ENCODE measurements at regions of chr9 and their contacts with region 1.

Region 1: DNA sequence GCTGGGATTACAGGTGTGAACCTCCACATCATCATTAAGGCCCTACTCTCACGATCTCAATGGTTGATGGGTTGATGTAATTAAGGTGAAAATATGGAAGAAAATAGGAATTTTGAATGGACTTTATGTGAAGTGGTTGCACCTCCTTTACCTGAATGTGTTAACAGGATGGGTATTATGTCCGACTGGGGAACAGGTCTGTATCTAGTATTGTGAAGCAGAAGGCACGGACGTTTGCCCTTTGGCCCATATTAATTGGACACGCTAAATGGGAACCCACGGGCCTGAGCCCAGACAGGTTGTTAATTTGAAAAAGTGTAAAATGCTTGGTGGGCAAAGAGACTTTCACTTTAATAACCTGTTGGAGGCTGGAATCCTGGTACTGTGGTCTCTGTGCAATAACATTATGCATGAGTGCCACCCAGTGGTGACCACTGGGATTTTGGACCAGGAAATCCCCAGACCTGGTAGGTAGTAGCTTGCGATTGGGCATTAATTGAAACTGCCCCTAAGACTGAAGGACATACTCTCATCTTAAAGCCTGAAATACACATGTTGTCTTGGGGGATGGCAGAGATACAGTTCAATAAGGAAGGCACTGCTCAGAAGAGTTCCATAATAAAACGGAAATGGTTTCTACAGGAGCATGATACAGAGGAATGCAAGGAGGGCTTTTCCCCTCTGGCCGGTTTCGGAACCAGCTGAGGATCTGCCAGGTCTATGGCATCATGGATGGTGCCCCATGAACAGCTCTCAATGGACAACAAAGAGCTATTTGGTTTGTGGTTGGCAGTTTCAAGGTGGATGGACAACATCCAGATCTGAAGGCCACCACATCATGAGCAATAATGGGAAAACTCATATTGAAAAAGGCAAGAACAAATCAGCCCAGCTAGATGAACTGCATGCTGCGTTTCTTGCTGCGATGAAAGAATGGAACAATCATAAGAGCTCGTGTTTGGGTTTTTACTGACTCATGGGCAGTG is 26.2 kb upstream of the BICD2 start:
- DNase-seq: peak; percentile 60 to 86
- ATAC-seq: peak; percentile 95

Region 2: GRCh38 chr9:92716557-92716956 is 74.3 kb before region 1 on chr9:
- intact Hi-C with region 1: loop called (anchors 5 to 10 kb)
- DNase-seq: peak; percentile 28 to 78
- ATAC-seq: peak; percentile 55

Region 3: DNA sequence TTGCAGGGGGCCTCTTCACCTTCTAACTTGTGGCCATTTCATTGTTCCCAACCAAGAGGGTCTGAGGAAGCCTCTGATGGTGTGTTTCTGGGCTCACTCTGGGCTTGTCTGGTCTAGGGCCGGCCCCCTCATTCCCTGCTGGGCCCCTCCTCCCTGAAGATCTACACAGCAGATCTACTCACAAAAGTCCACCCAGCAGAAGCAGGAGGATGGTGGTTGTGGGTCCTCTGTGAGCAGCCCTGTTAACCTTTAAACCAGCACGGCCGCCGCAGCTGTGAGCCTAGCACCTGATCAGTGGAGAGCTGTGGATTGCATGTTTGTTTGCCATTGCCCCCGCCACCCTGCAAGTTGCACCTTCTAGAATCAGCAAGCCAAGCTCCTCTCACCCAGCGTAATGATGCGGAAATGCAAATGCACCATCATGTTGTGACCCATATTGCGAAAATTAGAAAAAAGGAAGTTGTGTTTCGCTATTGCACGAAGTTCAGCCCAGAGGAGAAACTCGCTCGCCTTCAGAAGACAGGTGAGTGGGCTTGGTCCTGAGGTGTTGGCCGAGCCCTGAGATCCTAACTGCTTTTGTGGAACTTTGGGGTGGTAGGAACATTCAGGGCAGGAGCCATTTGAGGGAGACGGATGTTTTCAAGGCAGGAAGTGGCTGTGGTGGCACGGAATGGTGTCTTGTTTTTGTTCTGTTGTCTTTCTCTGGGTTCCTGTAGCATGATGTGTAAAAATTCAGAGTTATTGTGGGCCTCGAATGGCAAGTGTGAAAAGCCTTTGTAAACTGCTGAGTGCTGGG is 173.2 kb after region 1 on chr9:
- intact Hi-C with region 1: no loop called
- DNase-seq: peak in 1 of 2 donors; percentile 55
- ATAC-seq: peak; percentile 31

Measured in left colon (tissue), 2 donors.